Adrenal gland (tissue), 19 donors: ENCODE measurements at regions of chr16 and their contacts with region 1.

Region 1: DNA sequence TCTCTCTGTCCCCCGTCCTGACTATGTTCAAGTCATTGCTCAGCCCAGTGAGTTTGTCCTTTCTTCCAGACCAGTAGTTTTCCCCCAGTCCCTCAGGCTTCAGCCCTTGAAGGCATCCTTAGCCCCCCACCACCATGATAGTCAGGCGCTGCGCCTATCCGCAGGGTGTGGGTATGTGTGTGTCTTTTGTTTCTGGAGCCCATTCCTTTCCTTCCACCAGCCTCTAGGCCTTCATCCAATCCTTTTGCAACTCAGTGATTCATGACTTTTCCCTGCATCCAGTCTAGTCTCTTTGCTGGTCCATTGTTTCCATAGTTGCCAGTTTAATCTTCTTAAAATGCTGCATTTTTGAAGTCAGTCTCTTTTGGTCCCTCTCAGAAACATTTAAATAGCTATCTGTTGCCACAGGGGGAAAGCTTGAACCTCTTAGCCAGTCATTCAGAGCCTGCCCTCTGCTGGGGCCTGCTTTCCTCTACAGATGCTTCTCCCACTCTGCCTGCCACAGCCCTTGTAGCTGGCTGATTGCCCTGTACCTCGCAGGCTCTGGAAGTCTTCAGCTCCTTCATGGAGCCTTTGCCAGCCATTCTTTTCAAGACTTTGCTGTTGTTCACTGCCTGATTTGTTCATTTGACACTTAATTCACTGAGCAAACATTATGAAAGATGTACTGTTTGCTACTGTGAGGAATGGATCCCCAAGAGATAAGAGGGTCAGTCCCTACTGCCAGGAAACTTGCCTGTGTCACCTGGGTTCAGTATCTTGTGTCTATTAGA is 55.9 kb upstream of the ADCY7 start:
- DNase-seq: peak; percentile 73 to 94 (median 87)
- H3K4me3 ChIP-seq: no peak overlapping the region
- H3K27ac ChIP-seq: peak overlapping the region in 3 of 5 donors; percentile 29 to 35 (median 35)
- H3K4me1 ChIP-seq: peaks cover 39 to 50% of the 10 kb centered on the region in 2 donors
- H3K27me3 ChIP-seq: no peaks in the 10 kb centered on the region
- CTCF ChIP-seq: peak; percentile 49 to 82 (median 70)
- POLR2A ChIP-seq: no peak

Region 2: GRCh38 chr16:50065624-50066481 is 144.6 kb before region 1 on chr16 and contains the start of gene HEATR3:
- intact Hi-C with region 1: loop called in 1 of 2 experiments (anchors 5 kb)
- DNase-seq: peak; percentile 90 to 96 (median 93)
- H3K4me3 ChIP-seq: peak within 1 kb of the TSS; percentile 28 to 94 (median 80)
- H3K27ac ChIP-seq: peak within 1 kb of the TSS; percentile 90 to 99 (median 97)
- H3K4me1 ChIP-seq: peaks cover 4 to 24% of the 10 kb centered on the region in 2 donors
- H3K27me3 ChIP-seq: no peaks in the 10 kb centered on the region
- CTCF ChIP-seq: peak in 1 of 6 experiments; percentile 0
- POLR2A ChIP-seq: peak; percentile 47 to 76
- total RNA-seq, gene HEATR3: 10.9 to 35.3 (median 20.5) TPM

Region 3: DNA sequence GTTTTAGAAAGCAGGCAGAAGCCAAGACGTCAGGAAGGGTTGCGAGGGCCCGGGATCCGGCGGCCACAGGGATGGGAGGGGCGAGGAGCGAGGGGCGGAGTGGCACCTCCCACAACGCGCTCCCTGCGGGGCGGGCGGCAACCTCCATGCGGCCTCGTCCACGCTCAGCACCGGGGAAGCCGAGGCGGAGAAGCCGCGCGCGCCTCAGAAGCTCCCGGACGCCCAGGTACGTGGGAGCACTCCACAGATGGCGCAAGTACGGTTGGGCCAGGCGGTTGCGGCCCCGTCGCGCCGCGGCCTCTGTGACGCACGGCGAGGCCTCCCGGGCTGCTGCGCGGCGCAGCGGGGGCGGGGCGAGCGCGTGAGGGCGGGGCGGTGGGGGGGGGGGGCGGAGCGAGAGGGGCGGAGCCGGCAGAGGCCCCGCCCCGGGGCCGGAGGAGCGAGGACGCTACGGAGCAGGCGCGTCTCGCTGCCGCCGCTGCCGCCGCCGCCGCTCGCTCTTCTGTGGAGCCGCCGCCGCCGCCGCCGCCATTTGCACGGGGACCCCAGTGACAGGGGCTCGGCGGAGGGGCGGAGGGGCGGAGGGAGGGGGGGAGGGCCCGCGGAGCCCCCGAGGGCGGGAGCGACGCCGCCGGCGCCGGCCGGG is 57.5 kb before region 1 on chr16 and contains the start of gene TENT4B:
- intact Hi-C with region 1: loop called in 1 of 2 experiments (anchors 5 kb)
- DNase-seq: peak; percentile 85 to 91 (median 89)
- H3K4me3 ChIP-seq: peak within 1 kb of the TSS; percentile 77 to 86 (median 84)
- H3K27ac ChIP-seq: peak within 1 kb of the TSS; percentile 85 to 99 (median 97)
- H3K4me1 ChIP-seq: peaks cover 17 to 29% of the 10 kb centered on the region in 2 donors
- H3K27me3 ChIP-seq: no peaks in the 10 kb centered on the region
- CTCF ChIP-seq: no peak
- POLR2A ChIP-seq: peak; percentile 67 to 78
- total RNA-seq, gene TENT4B: 6.8 to 20.3 (median 13.8) TPM

Region 4: DNA sequence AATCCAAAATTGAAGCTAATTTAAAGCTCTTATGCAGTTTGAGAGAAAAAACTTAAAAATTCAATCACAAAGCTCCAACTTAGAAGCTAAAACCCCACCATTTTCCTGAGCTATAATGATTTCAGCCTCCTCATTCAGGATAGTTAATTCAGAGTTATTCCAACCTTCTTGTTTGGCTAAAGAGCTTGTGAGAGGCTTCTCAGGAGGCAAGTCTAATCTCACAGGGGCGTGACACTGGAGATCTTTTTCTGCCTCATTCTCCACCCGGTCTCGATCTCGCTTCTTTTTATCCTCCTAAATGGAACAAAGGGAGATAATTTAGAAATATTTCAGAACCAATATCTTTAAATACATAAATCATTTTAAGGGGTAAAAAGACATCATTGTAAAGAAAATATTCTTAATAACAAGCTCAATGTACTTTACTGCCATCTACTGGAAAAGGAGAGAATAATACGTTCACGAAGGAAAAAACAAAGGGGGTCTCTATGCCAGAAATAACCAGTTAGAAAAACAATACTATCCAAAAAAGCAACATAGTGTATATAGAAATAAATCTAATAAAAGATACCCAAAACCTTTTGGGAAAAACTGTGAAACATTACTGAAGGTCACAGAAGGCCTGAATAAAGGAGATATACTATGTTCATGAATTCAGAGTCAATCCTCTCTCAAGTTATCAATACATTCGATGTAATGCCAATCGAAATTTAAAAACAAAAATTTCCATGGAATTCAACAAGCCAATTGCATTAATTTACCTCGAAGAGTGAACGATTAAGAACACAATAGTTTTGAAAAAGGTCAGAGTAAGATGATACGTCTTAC is 144.4 kb after region 1 on chr16:
- intact Hi-C with region 1: loop called in 1 of 2 experiments (anchors 10 kb)
- DNase-seq: no peak
- H3K4me3 ChIP-seq: no peak overlapping the region
- H3K27ac ChIP-seq: no peak overlapping the region
- H3K4me1 ChIP-seq: peaks cover 0 to 3% of the 10 kb centered on the region in 2 donors
- H3K27me3 ChIP-seq: no peaks in the 10 kb centered on the region
- CTCF ChIP-seq: peak; percentile 22 to 70 (median 50)
- POLR2A ChIP-seq: no peak